ENCODE measurements at regions of chr11 and their contacts with region 1.

Region 1: DNA sequence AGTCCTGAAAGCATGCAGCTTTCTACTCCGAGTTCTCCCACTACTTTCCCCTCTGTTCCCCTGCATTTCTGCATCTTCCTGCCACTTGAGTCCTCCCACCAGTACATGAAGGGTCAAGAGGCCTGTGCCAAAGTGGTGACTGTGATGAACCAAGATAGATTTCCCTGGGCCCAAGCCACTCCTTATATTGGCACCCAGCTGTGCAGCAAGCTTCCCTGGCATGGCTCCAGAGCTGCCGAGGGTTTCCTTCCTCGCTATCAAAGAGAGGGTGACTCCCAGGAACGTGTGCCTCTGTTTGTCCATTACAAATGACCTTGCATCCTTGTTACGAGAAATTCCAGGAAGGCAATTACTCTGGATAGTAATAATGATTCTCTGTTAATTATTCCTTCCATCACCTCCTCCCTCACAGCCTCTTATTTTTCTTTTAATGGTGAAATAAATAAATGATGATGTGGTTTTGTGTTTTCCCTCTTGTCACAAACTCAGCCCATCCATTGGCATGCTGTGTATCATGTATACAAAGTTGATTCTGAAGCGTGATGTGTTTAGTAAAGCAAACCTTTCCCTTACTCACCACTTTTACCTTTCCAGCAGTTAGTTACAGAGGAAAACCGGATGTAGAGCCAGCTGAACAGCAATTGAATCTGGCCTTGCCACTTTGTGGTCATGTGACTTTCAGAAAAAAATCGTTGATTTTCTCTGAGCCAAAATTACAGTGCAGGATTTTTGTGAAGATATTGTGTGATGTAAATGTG is 8.3 kb downstream of the SRSF8 start:
- DNase-seq: peak in 1 of 2 donors; percentile 47
- H3K4me3 ChIP-seq: no peak overlapping the region
- H3K27ac ChIP-seq: peak overlapping the region; percentile 81 to 88
- H3K4me1 ChIP-seq: peaks cover 0 to 7% of the 10 kb centered on the region in 2 donors
- H3K27me3 ChIP-seq: no peaks in the 10 kb centered on the region
- CTCF ChIP-seq: no peak
- POLR2A ChIP-seq: no peak

Region 2: GRCh38 chr11:95108671-95109551 is 33.9 kb after region 1 on chr11:
- intact Hi-C with region 1: loop called (anchors 1 kb)
- DNase-seq: no peak
- H3K4me3 ChIP-seq: peak overlapping the region in 1 of 3 donors; percentile 19
- H3K27ac ChIP-seq: peak overlapping the region; percentile 85 to 86
- H3K4me1 ChIP-seq: peaks cover 3 to 5% of the 10 kb centered on the region in 2 donors
- H3K27me3 ChIP-seq: no peaks in the 10 kb centered on the region
- CTCF ChIP-seq: no peak
- POLR2A ChIP-seq: no peak

Measured in breast epithelium (tissue), 4 donors.